CD8-positive, alpha-beta memory T cell (primary cell): ENCODE measurements at regions of chr1 and their contacts with region 1.

Region 1: GRCh38 chr1:52056163-52056936 is at the start of gene BTF3L4:
- DNase-seq: peak; percentile 87 to 94 (median 90)
- H3K4me3 ChIP-seq: peak within 1 kb of the TSS; percentile 97
- H3K4me3 Mint-ChIP-seq: peak within 1 kb of the TSS; percentile 94 to 100 (median 98)
- H3K27ac ChIP-seq: peak within 1 kb of the TSS; percentile 87
- H3K27ac Mint-ChIP-seq: peak within 1 kb of the TSS; percentile 91 to 100 (median 96)
- H3K4me1 ChIP-seq: peaks cover 34% of the 10 kb centered on the region
- H3K4me1 Mint-ChIP-seq: peaks cover 51 to 79% (median 74%) of the 10 kb centered on the region in 3 donors
- H3K27me3 ChIP-seq: no peaks in the 10 kb centered on the region
- H3K27me3 Mint-ChIP-seq: no peaks in the 10 kb centered on the region
- total RNA-seq, gene BTF3L4: 31.8 to 32.4 TPM

Region 2: GRCh38 chr1:52033190-52034049 is 22.9 kb before region 1 on chr1 and contains the start of gene KTI12:
- CTCF ChIA-PET with region 1: interaction called, 3 read pairs
- POLR2A ChIA-PET with region 1: interaction called, 23 read pairs
- DNase-seq: peak; percentile 82 to 95 (median 89)
- H3K4me3 ChIP-seq: peak within 1 kb of the TSS; percentile 74
- H3K4me3 Mint-ChIP-seq: peak within 1 kb of the TSS; percentile 93 to 99 (median 93)
- H3K27ac ChIP-seq: peak within 1 kb of the TSS; percentile 91
- H3K27ac Mint-ChIP-seq: peak within 1 kb of the TSS; percentile 90 to 98 (median 96)
- H3K4me1 ChIP-seq: peaks cover 30% of the 10 kb centered on the region
- H3K4me1 Mint-ChIP-seq: peaks cover 33 to 49% (median 44%) of the 10 kb centered on the region in 3 donors
- H3K27me3 ChIP-seq: no peaks in the 10 kb centered on the region
- H3K27me3 Mint-ChIP-seq: peaks cover 0 to 4% of the 10 kb centered on the region in 2 donors
- total RNA-seq, gene KTI12: 16.4 to 18.1 TPM